A549 (cell line): ENCODE measurements at regions of chr7 and their contacts with region 1.

Region 1: DNA sequence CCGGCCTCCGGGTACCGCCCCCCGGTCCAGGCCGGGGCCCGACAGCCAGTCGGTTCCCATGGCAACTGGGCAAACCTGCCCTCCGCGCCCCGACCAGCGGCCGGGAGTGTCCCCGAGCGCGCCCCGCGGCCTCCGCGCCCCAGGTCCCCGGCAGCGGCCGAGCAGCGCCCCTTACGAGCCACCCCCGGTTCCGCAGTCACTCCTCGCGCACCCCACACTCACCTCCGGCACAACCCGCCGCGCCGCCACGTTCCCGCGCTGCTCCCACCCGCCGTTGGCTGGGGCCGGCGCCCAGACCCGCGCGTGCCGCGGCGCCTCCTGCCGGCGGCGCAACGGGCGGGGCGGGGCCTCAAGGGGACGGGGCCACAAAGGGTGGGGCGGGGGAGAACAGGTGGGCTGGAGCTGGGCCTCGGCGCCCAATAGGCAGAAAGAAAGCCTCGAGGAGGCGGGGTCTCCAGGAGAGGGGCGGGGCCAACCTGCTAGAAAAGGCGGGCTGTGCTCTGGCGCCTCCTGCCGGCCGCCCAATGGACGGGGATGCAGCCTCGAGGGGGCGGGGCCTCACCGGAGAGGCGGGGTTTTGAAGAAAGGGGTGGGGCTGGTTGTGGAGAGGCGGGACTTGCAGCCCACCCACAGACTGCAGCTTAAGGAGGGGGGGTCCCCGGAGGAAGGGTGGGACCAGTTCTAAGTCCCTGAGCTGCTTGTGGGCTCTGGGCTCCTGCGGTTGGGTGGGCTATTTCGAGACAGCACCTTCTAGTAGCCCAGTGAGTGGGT is at the start of gene RADIL:
- DNase-seq: peak; percentile 90 to 95
- ATAC-seq: peak; percentile 91 to 96
- H3K4me3 ChIP-seq: peak within 1 kb of the TSS; percentile 71
- H3K27ac ChIP-seq: peak within 1 kb of the TSS; percentile 63 to 87
- H3K4me1 ChIP-seq: 0 out of 3 replicates have a peak, but pooled peaks cover 4% of the 10 kb centered on the region
- CTCF ChIP-seq: peak; percentile 85
- EP300 ChIP-seq: no peak
- POLR2A ChIP-seq: peak; percentile 29; the same call in 1 of the 2 replicates
- RAD21 ChIP-seq: peak; percentile 57 to 71
- polyA plus RNA-seq, gene RADIL: 1.0 TPM in 2 replicates

Region 2: GRCh38 chr7:4738711-4739527 is 144.6 kb before region 1 on chr7:
- CTCF ChIA-PET with region 1: no interaction called
- POLR2A ChIA-PET with region 1: no interaction called
- DNase-seq: peak; percentile 91 to 98
- ATAC-seq: peak; percentile 87 to 88
- H3K4me3 ChIP-seq: peak overlapping the region; percentile 23; the same call in 2 of the 3 replicates
- H3K27ac ChIP-seq: peak overlapping the region; percentile 96 to 99
- H3K4me1 ChIP-seq: peaks cover 65% of the 10 kb centered on the region
- CTCF ChIP-seq: no peak
- EP300 ChIP-seq: peak; percentile 90 to 96; a peak in 4 of 5 replicates
- POLR2A ChIP-seq: 0 out of 2 replicates have a peak, but pooled peaks have one; percentile 9
- RAD21 ChIP-seq: peak; percentile 38 to 55

Region 3: DNA sequence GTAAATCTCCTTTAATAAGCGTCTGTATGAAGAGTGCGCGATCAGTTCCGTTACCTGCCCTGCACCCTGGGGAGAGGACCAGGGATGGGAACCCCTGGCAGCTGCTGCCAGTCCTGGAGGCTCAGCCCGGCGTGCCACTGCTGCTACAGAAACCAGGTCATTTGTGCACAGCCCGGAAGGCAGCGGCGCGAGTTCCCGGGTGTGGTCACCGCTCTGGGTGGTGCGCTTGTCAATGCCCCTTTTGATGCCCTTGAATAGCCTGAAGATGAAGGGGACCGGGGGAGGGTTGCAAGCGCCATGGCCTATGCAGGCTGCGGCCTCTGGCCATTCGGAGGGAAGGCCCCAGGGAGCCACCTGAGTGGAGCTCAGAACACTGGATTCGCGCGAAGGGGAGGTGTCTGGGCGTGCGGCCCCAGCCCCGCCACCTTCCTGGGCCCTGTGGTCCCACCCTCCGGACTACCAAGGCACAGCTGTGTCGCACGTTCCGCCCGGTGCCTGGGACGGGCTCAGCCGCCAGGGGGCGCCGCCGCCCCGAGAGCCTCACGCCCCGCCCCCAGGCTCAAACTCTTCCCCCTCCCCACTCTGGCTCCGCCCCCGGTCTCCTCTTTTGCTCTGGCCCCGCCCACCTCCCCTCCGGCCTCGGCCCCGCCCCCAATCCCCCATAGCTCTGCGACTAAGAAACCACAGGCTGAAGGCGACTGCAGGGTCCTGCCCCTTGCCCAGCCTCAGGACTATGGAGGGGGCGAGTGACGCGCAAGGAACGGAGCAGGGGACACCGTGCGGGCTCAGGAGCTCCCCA is 91.6 kb before region 1 on chr7:
- CTCF ChIA-PET with region 1: interaction called, 24 read pairs
- POLR2A ChIA-PET with region 1: no interaction called
- DNase-seq: peak in 1 of 2 experiments; percentile 64
- ATAC-seq: peak; percentile 17 to 74; a peak in 3 of 6 replicates
- H3K4me3 ChIP-seq: no peak overlapping the region
- H3K27ac ChIP-seq: no peak overlapping the region
- H3K4me1 ChIP-seq: no peaks in the 10 kb centered on the region
- CTCF ChIP-seq: peak; percentile 32
- EP300 ChIP-seq: no peak
- POLR2A ChIP-seq: no peak
- RAD21 ChIP-seq: no peak

Region 4: DNA sequence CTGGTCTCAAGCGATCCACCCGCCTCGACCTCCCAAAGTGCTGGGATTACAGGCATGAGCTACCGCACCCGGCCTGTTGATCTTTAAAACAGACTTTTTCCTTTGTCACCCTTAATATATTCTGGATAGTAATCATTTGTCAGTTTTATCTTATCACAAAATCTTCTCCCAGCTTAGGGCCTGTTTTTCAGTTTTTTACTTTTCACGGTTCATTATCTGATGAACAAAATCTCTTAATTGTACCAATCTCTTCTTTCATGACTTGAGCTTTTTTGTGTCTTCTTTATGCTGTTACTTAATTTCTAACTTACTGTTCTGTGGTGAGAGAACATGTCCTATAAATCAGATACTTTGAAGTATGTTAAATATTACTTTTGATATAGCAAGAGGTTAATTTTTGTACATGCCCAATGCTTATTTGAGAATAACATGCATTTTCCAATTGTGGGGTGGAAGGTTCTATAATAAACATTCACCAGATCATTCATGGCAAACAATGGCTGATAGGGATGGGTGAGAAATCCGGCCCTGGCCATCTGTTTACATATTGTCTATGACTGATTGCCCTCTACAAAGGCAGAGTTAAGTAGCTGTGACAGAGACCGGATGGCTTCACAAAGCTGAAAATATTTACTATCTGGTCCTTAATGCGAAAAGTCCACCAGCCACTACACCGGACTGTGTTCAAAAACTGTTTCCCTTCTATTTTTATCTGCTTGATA is 27.1 kb before region 1 on chr7:
- CTCF ChIA-PET with region 1: interaction called, 10 read pairs
- POLR2A ChIA-PET with region 1: no interaction called
- DNase-seq: no peak
- ATAC-seq: no peak
- H3K4me3 ChIP-seq: no peak overlapping the region
- H3K27ac ChIP-seq: no peak overlapping the region
- H3K4me1 ChIP-seq: no peaks in the 10 kb centered on the region
- CTCF ChIP-seq: no peak
- EP300 ChIP-seq: no peak
- POLR2A ChIP-seq: no peak
- RAD21 ChIP-seq: no peak

Region 5: GRCh38 chr7:4871930-4872675 is 11.5 kb before region 1 on chr7:
- CTCF ChIA-PET with region 1: interaction called, 17 read pairs
- POLR2A ChIA-PET with region 1: no interaction called
- DNase-seq: no peak
- ATAC-seq: no peak
- H3K4me3 ChIP-seq: no peak overlapping the region
- H3K27ac ChIP-seq: no peak overlapping the region
- H3K4me1 ChIP-seq: no peaks in the 10 kb centered on the region
- CTCF ChIP-seq: no peak
- EP300 ChIP-seq: no peak
- POLR2A ChIP-seq: no peak
- RAD21 ChIP-seq: no peak

Region 6: DNA sequence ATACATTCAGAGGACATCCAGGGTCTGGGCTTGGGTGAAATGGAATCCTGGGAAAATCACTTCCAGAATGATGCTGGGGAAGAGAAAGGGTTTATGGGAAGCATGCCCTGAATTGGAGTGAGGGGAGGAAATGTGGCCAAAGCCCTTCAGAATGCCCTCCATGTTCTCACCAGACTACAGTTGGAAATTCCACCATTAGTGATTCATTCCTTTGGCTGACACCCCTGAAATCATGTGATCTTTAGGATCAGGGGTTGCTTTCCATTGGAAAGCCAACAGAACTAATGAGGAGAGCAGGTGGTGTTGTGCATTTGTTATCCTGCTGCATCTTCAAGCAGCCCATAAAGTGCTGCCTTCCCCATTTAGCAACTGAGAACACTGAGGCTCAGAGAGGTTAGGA is 20.8 kb after region 1 on chr7:
- CTCF ChIA-PET with region 1: interaction called, 10 read pairs
- POLR2A ChIA-PET with region 1: no interaction called
- DNase-seq: no peak
- ATAC-seq: no peak
- H3K4me3 ChIP-seq: no peak overlapping the region
- H3K27ac ChIP-seq: no peak overlapping the region
- H3K4me1 ChIP-seq: no peaks in the 10 kb centered on the region
- CTCF ChIP-seq: no peak
- EP300 ChIP-seq: no peak
- POLR2A ChIP-seq: no peak
- RAD21 ChIP-seq: no peak